Caco-2 (cell line): ENCODE measurements at regions of chr2 and their contacts with region 1.

Region 1: GRCh38 chr2:162581959-162582798 is 238.2 kb downstream of the GCA start:
- DNase-seq: peak; percentile 77 to 84
- H3K4me3 ChIP-seq: no peak overlapping the region
- H3K4me3 Mint-ChIP-seq: no peak overlapping the region
- H3K27ac Mint-ChIP-seq: peak overlapping the region; percentile 62
- H3K4me1 ChIP-seq: peaks cover 46% of the 10 kb centered on the region
- H3K4me1 Mint-ChIP-seq: peaks cover 47% of the 10 kb centered on the region
- H3K27me3 ChIP-seq: no peaks in the 10 kb centered on the region
- H3K27me3 Mint-ChIP-seq: no peaks in the 10 kb centered on the region
- CTCF ChIP-seq: no peak

Region 2: GRCh38 chr2:162545250-162545649 is 36.9 kb before region 1 on chr2:
- CTCF ChIA-PET with region 1: no interaction called
- POLR2A ChIA-PET with region 1: no interaction called
- intact Hi-C with region 1: loop called (anchors 1 kb)
- DNase-seq: peak; percentile 42 to 46
- H3K4me3 ChIP-seq: no peak overlapping the region
- H3K4me3 Mint-ChIP-seq: no peak overlapping the region
- H3K27ac Mint-ChIP-seq: no peak overlapping the region
- H3K4me1 ChIP-seq: peaks cover 23% of the 10 kb centered on the region
- H3K4me1 Mint-ChIP-seq: peaks cover 13% of the 10 kb centered on the region
- H3K27me3 ChIP-seq: no peaks in the 10 kb centered on the region
- H3K27me3 Mint-ChIP-seq: no peaks in the 10 kb centered on the region
- CTCF ChIP-seq: no peak

Region 3: GRCh38 chr2:162555155-162555554 is 27.0 kb before region 1 on chr2:
- CTCF ChIA-PET with region 1: no interaction called
- POLR2A ChIA-PET with region 1: no interaction called
- intact Hi-C with region 1: loop called (anchors 1 kb)
- DNase-seq: peak in 1 of 2 experiments; percentile 15
- H3K4me3 ChIP-seq: no peak overlapping the region
- H3K4me3 Mint-ChIP-seq: no peak overlapping the region
- H3K27ac Mint-ChIP-seq: no peak overlapping the region
- H3K4me1 ChIP-seq: peaks cover 23% of the 10 kb centered on the region
- H3K4me1 Mint-ChIP-seq: peaks cover 32% of the 10 kb centered on the region
- H3K27me3 ChIP-seq: no peaks in the 10 kb centered on the region
- H3K27me3 Mint-ChIP-seq: no peaks in the 10 kb centered on the region
- CTCF ChIP-seq: no peak

Region 4: GRCh38 chr2:162710287-162710890 is 128.2 kb after region 1 on chr2:
- CTCF ChIA-PET with region 1: no interaction called
- POLR2A ChIA-PET with region 1: no interaction called
- intact Hi-C with region 1: loop called (anchors 5 kb)
- DNase-seq: peak in 1 of 2 experiments; percentile 22
- H3K4me3 ChIP-seq: no peak overlapping the region
- H3K4me3 Mint-ChIP-seq: no peak overlapping the region
- H3K27ac Mint-ChIP-seq: peak overlapping the region; percentile 33
- H3K4me1 ChIP-seq: peaks cover 42% of the 10 kb centered on the region
- H3K4me1 Mint-ChIP-seq: peaks cover 43% of the 10 kb centered on the region
- H3K27me3 ChIP-seq: no peaks in the 10 kb centered on the region
- H3K27me3 Mint-ChIP-seq: no peaks in the 10 kb centered on the region
- CTCF ChIP-seq: no peak